Sciatic nerve (tissue), 2 donors: ENCODE measurements at regions of chr11 and their contacts with region 1.

Region 1: DNA sequence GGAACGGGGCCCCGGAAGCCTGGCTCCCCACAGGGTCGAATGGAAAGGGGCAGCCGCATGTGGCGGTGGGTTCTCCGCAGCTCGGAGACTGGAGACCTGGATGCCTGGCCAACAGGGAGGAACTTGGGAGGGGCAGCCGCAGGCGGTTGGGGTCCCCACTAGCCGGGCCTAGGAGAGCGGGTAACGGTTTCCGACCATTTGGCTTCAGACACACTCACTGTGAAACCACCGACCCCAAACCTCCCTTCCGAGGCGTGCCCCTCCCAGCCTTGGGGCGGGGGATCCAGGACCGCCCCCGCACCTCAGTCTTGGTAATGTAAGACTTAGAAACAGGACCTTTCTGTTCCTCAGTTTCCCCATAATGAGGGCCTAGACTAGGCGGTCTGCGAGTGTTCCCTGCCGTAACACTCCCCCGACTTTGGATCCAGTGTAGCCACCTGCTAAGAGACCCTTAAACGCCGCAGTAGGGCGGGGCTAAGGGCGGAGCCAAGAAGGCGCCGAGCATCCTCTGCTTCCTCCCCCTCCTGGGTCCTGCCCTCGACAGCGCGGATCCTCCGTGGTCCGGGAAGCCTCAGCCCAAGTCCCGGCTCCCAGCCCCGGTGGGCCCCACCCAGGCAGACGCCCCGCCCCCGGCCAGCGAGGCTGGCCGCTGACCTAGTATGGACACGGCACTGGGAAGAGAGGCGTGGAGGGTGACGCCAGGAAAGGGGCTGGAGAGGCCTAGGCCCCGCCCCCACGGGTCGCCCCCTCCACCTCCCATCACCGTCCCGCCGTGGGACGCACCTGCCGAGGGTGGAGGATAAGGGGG is 1.8 kb upstream of the RASGRP2 start:
- DNase-seq: peak; percentile 88
- ATAC-seq: peak; percentile 78

Region 2: GRCh38 chr11:63289658-63290057 is 1456.1 kb before region 1 on chr11:
- intact Hi-C with region 1: loop called (anchors 5 kb)
- DNase-seq: no peak
- ATAC-seq: no peak

Region 3: DNA sequence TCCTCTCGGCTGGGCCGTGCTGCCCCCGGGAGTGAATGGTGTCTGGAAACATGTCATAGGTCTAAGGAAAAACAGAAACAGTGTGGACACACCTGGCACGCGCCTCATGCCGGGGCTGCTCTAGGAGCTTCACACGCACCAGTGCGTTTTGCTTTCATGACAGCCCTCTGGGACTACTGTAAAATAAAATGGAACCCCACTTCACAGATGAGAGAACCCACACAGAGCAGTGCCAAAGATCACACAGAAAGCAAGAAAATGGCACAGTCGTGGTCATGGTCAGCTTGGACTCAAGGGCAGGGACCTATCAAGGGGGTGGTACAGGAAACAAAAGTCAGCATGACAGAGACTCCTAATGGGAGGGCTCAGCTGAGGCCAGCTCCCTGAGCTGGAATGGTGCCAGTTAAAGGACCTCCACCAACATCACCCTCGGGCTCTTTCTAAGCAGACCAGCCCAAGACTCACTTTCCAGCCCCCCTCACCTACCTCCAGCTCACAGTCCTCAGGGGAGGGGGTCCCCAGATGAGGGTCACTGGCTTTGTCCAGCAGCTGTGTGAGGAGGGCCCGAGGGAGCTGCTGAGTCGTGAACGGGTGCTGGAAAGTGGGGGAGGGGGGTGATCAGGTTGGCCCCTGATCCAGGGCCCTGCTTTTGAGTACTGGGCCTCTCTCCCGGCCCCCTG is 54.0 kb after region 1 on chr11:
- intact Hi-C with region 1: no loop called
- DNase-seq: no peak
- ATAC-seq: no peak